PC-3 (cell line): ENCODE measurements at regions of chr11 and their contacts with region 1.

Region 1: GRCh38 chr11:79082280-79082679 is 358.6 kb downstream of the TENM4 start:
- DNase-seq: no peak
- ATAC-seq: no peak
- H3K4me3 ChIP-seq: no peak overlapping the region
- H3K27ac ChIP-seq: no peak overlapping the region
- H3K4me1 ChIP-seq: peaks cover 6% of the 10 kb centered on the region
- H3K27me3 ChIP-seq: no peaks in the 10 kb centered on the region
- CTCF ChIP-seq: no peak

Region 2: DNA sequence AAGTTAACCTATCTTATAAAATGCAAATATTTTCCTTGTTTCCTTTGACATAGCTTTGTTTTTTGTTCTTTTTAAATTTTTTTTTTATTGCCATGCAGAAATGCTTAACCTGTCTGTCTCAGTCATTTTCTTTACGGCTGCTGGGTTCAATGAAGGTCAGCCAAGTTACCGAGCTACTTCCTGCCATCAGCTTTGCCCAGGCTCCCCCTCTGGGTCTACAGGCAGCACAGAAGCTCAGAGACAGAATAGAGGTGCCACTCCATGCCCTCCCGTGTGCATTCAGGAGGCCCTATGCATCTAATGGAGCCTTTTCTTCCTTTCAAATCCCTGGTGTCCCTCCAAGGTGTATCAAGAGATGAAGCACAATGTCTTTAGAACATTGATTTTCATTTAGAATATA is 96.6 kb before region 1 on chr11:
- CTCF ChIA-PET with region 1: no interaction called
- POLR2A ChIA-PET with region 1: interaction called, 10 read pairs
- intact Hi-C with region 1: no loop called
- DNase-seq: no peak
- ATAC-seq: no peak
- H3K4me3 ChIP-seq: no peak overlapping the region
- H3K27ac ChIP-seq: no peak overlapping the region
- H3K4me1 ChIP-seq: no peaks in the 10 kb centered on the region
- H3K27me3 ChIP-seq: no peaks in the 10 kb centered on the region
- CTCF ChIP-seq: no peak